ENCODE measurements at regions of chr7 and their contacts with region 1.

Region 1: DNA sequence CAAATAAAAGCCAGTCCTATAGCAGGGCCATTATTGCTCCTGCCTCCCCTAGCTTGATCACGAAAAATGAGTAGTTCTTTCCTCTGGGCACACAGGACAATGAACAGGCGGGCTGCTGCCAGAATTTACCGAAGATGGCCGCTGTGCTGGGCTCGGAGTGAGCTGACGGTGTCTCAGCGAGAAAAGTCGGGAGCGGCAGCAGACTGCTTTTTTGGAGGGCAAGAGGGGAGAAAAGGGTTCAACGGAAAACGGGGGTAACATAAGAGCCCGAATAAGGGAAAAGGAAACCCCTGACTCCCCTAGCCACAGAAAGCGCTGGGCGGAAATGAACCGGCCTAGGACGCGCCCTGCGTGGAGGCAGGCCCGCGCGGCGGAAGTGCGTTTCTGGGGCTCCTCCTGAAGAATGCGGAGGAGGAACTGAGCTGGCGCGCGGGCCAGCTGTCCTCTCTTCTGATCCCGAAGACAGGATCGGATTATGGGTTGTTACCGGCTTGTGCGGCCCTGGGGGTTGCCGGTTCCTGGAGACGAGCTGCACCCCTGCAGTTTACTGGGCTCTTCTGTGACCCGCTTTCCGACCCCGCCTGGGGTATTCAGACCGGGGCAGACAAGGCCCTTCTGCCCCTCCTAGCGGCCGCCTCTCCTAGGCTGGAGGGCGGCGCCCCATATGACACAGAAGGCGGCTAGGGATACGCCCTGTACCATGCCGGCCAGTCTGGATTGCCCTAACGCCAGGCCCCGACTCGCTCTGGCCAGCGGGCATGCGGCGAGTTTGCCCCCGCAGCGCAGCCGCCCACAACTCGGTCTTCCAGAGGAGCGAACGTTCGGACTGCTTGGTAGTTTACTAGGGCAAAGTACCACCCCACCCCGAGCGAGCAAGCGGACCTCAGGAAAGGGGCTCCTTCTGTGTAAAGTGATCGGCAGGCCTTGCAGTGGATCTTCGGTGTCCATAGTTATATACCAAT is 30.1 kb upstream of the KMT2E start:
- DNase-seq: peak; percentile 94
- ATAC-seq: peak; percentile 95 to 96

Region 2: DNA sequence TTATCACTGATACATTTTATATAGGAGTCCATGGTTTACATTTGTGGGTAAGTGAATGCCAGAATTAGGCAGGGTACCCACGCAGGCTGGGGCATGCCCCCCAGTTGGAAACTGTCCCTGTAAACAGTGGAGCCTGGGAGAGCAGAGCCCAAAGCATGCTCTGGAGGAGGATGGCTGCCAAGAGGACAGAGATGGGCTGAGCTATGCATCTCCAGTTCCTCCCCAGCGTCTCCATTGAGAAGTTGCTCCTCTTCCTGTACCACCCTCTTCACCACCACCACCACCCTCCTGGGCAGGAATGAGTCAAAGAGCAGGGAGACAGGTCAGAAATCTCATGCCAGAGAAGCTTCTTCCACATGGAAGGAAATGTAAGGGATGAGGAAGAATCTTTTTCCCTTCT is 37.5 kb before region 1 on chr7:
- intact Hi-C with region 1: loop called in 1 of 2 experiments (anchors 5 kb)
- DNase-seq: no peak
- ATAC-seq: no peak

Region 3: GRCh38 chr7:105013816-105014692 is 30.2 kb after region 1 on chr7 and contains the start of gene KMT2E:
- intact Hi-C with region 1: loop called in 1 of 2 experiments (anchors 1 kb)
- DNase-seq: peak; percentile 90
- ATAC-seq: peak; percentile 73 to 74
- total RNA-seq, gene KMT2E: 45.3 to 59.0 TPM

Region 4: GRCh38 chr7:105046414-105046813 is 62.6 kb after region 1 on chr7:
- intact Hi-C with region 1: loop called in 1 of 2 experiments (anchors 10 kb)
- DNase-seq: no peak
- ATAC-seq: peak in 1 of 2 donors; percentile 22

Region 5: DNA sequence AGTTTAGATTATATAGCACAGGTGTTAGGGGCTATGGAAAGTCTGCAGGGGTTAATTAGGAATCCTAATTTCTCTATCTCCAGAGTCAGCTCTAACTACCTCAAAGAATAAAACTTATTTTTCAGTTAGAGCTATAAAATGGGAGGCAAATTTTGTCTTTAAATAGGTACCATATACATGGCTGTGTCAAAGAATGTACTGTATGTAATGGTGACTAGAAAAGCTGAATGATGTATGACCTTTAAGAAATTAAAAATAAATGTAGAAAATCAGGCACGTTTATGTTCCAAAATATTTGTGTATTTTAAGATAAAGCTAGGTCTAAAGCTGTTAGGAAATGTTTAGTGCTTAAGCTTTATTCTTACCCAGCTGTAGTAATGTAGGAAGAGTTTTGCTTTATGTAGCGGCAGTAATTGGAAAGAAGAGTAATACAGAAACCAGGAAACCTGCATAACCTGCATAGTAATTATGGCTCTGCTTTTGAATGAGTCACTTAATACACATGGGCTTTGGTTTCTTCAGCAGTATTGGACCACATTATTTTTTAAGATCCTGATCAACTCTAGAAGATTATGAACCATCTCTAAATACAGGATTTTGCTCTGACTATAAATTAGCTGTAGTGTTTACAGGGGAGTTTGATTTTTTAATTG is 115.1 kb after region 1 on chr7:
- intact Hi-C with region 1: no loop called
- DNase-seq: no peak
- ATAC-seq: no peak

Region 6: DNA sequence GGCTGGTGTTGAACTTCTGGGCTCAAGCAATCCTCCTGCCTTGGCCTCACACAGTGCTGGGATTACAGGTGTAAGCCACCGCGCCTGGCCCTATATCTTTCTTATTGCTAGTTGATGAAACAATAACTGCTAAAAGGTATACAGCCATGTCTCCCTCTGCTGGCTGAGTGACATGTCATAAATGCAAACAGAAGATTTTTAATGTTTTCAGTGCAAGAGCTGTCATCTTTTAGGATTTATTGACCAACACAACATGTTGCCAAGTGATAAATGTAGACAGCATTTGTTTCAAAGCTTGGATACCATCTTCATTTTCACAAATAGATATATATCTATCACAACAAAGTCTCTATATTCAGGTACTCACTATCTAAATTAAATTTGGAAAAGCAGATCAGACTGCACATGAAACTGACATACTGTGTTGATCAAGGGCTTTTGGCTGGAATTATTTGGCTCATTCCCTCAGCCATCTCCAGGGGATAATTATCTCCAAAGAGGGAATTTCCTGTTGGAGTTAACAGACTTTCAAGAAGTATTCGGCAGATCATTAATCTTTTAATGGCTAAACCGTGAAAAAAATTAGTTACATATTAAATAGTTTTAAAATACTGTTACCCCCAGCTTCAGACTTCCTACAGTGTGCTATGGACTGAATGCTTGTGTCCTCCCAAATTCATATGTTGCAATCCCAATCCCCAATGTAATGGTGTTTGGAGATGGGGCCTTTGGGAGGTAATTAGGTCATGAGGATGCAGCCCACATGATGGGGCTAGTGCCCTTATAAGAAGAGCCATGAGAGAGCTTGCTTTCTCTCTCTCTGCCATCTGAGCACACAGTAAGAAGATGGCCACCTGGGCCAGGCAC is 446.1 kb after region 1 on chr7:
- intact Hi-C with region 1: loop called in 1 of 2 experiments (anchors 10 kb)
- DNase-seq: peak; percentile 37
- ATAC-seq: peak; percentile 27 to 49

Measured in left cardiac atrium (tissue), 4 donors.